MCF 10A (cell line): ENCODE measurements at regions of chr7 and their contacts with region 1.

Region 1: GRCh38 chr7:80918909-80919662 is at the start of gene SEMA3C:
- DNase-seq: peak; percentile 94
- H3K4me3 Mint-ChIP-seq: peak within 1 kb of the TSS; percentile 91
- H3K27ac Mint-ChIP-seq: peak within 1 kb of the TSS; percentile 87
- H3K4me1 Mint-ChIP-seq: peaks cover 29% of the 10 kb centered on the region
- H3K27me3 Mint-ChIP-seq: no peaks in the 10 kb centered on the region
- CTCF ChIP-seq: no peak
- total RNA-seq, gene SEMA3C: 91.0 and 140 TPM in 2 replicates

Region 2: GRCh38 chr7:80781561-80781979 is 137.5 kb before region 1 on chr7:
- CTCF ChIA-PET with region 1: no interaction called
- POLR2A ChIA-PET with region 1: interaction called, 14 read pairs
- intact Hi-C with region 1: no loop called
- DNase-seq: peak; percentile 96
- H3K4me3 Mint-ChIP-seq: peak overlapping the region; percentile 6
- H3K27ac Mint-ChIP-seq: peak overlapping the region; percentile 57
- H3K4me1 Mint-ChIP-seq: peaks cover 52% of the 10 kb centered on the region
- H3K27me3 Mint-ChIP-seq: no peaks in the 10 kb centered on the region
- CTCF ChIP-seq: no peak

Region 3: GRCh38 chr7:80859272-80859970 is 59.7 kb before region 1 on chr7:
- CTCF ChIA-PET with region 1: interaction called, 4 read pairs
- POLR2A ChIA-PET with region 1: interaction called, 13 read pairs
- intact Hi-C with region 1: no loop called
- DNase-seq: peak; percentile 65
- H3K4me3 Mint-ChIP-seq: peak overlapping the region; percentile 27
- H3K27ac Mint-ChIP-seq: peak overlapping the region; percentile 94
- H3K4me1 Mint-ChIP-seq: peaks cover 37% of the 10 kb centered on the region
- H3K27me3 Mint-ChIP-seq: no peaks in the 10 kb centered on the region
- CTCF ChIP-seq: no peak

Region 4: DNA sequence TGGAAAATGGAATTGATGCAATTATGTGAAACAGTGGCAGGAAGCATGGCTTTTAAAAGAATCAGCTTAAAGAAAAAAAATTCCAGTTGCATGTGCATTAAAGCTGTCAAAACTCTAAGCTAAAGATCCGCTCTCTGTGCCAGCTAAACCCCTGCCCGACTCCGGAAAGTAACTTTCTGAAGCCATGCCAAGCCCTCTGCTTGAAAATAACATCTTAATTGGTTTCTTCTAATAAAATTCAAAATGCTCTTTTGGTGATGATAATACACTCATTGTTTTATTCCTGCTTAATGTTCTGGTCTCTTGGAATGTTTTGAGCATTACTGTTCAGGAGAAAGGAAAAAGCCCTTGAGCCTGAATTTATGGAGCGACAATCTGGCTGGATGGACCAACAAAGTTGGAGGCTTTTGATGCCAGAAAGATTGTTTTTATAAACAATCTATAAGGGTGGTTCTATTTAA is 11.9 kb before region 1 on chr7:
- CTCF ChIA-PET with region 1: interaction called, 7 read pairs
- POLR2A ChIA-PET with region 1: interaction called, 27 read pairs
- intact Hi-C with region 1: no loop called
- DNase-seq: no peak
- H3K4me3 Mint-ChIP-seq: no peak overlapping the region
- H3K27ac Mint-ChIP-seq: no peak overlapping the region
- H3K4me1 Mint-ChIP-seq: peaks cover 48% of the 10 kb centered on the region
- H3K27me3 Mint-ChIP-seq: no peaks in the 10 kb centered on the region
- CTCF ChIP-seq: no peak

Region 5: DNA sequence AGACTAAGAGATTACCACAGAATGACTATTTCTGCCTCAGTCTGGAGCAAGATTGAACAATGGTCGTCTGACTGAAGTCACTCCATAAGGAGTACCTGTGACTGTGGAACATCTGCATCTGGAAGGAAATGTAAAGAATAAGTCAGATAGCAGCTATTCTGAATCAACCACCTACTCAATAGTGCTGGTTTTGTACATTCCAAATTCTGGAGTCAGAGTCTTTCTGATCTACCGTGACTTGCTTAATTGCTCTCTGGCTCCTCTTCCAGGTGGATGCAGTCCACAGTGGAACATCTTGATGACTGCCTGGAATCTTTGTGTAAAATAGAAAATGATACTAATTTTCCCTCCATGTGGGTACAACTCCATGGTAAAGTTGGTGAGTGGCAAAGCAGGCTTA is 156.1 kb after region 1 on chr7:
- CTCF ChIA-PET with region 1: interaction called, 8 read pairs
- POLR2A ChIA-PET with region 1: interaction called, 36 read pairs
- intact Hi-C with region 1: loop called (anchors 1 kb)
- DNase-seq: peak; percentile 66
- H3K4me3 Mint-ChIP-seq: no peak overlapping the region
- H3K27ac Mint-ChIP-seq: peak overlapping the region; percentile 93
- H3K4me1 Mint-ChIP-seq: peaks cover 23% of the 10 kb centered on the region
- H3K27me3 Mint-ChIP-seq: no peaks in the 10 kb centered on the region
- CTCF ChIP-seq: no peak

Region 6: GRCh38 chr7:81447351-81447952 is 528.4 kb after region 1 on chr7:
- CTCF ChIA-PET with region 1: interaction called, 9 read pairs
- POLR2A ChIA-PET with region 1: interaction called, 15 read pairs
- intact Hi-C with region 1: loop called (anchors 1 kb)
- DNase-seq: peak; percentile 72
- H3K4me3 Mint-ChIP-seq: no peak overlapping the region
- H3K27ac Mint-ChIP-seq: no peak overlapping the region
- H3K4me1 Mint-ChIP-seq: no peaks in the 10 kb centered on the region
- H3K27me3 Mint-ChIP-seq: no peaks in the 10 kb centered on the region
- CTCF ChIP-seq: peak; percentile 75